ENCODE measurements at regions of chr2 and their contacts with region 1.

Region 1: DNA sequence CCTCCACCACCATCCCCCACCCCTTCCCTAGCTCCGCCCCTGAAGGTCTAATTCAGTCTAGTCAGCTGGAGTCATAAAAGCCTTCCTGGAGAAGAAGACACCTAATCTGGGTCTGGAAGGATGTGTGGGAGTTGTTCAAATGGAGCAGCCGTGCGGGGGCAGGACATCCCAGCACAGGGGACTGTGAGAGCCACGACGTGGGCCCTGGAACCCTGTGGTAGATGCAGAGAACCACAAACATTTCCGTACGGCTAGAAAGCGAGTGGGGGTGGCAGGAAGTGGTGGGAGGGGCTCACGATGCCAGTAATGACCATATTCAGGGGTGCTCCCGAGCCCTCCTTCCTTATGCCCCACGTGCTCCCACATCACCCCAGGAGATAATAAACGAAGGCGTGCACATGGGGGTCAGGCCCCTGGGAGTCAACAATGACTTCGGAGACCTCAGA is 20.9 kb upstream of the COL6A3 start:
- DNase-seq: peak; percentile 90
- H3K4me3 Mint-ChIP-seq: peak overlapping the region; percentile 7
- H3K27ac Mint-ChIP-seq: peak overlapping the region; percentile 61
- H3K4me1 Mint-ChIP-seq: peaks cover 85% of the 10 kb centered on the region
- H3K27me3 Mint-ChIP-seq: no peaks in the 10 kb centered on the region

Region 2: DNA sequence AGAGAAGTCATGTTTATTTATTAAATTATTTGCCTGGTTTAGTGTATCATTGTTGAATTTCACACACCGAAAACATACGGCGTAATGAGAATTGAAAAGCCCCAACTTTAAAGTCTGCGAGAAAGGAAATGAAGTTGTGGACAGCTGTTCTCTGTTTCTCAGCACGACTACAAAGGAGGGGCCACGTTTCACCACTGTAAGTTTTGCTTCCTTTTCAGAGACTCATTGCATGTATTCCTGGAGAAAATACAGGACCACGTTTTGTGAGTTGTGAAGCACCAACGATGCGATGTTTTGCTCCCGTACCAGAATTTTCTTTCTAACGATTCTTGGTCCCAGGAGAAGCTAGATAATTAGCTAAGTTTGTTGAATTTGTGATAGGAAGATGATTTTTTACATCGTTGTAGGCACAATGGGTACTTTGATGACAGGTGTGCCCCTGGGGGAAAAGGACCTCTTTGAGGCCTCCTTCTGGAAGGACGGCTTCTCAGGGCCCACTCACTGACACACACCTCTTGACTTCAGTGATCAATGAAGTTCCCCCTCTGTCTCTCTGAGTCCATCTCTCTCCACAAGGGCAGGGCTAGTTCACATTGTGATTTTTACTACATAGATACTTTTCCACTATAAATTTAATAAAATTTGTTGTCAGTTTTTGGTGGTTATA is 888.9 kb before region 1 on chr2:
- CTCF ChIA-PET with region 1: no interaction called
- intact Hi-C with region 1: loop called (anchors 5 kb)
- DNase-seq: peak; percentile 70
- H3K4me3 Mint-ChIP-seq: peak overlapping the region; percentile 64
- H3K27ac Mint-ChIP-seq: peak overlapping the region; percentile 89
- H3K4me1 Mint-ChIP-seq: peaks cover 82% of the 10 kb centered on the region
- H3K27me3 Mint-ChIP-seq: no peaks in the 10 kb centered on the region

Region 3: GRCh38 chr2:236562434-236562833 is 872.5 kb before region 1 on chr2:
- CTCF ChIA-PET with region 1: no interaction called
- intact Hi-C with region 1: no loop called
- DNase-seq: no peak
- H3K4me3 Mint-ChIP-seq: no peak overlapping the region
- H3K27ac Mint-ChIP-seq: no peak overlapping the region
- H3K4me1 Mint-ChIP-seq: peaks cover 28% of the 10 kb centered on the region
- H3K27me3 Mint-ChIP-seq: no peaks in the 10 kb centered on the region

Region 4: GRCh38 chr2:237085248-237086221 is 349.4 kb before region 1 on chr2 and contains the start of gene COPS8:
- CTCF ChIA-PET with region 1: no interaction called
- intact Hi-C with region 1: loop called (anchors 5 kb)
- DNase-seq: peak; percentile 93
- H3K4me3 Mint-ChIP-seq: peak within 1 kb of the TSS; percentile 97
- H3K27ac Mint-ChIP-seq: peak within 1 kb of the TSS; percentile 89
- H3K4me1 Mint-ChIP-seq: peaks cover 24% of the 10 kb centered on the region
- H3K27me3 Mint-ChIP-seq: no peaks in the 10 kb centered on the region
- total RNA-seq, gene COPS8: 67.8 to 69.2 TPM

Region 5: GRCh38 chr2:237154082-237154638 is 280.7 kb before region 1 on chr2:
- CTCF ChIA-PET with region 1: interaction called, 3 read pairs
- intact Hi-C with region 1: loop called (anchors 5 kb)
- DNase-seq: peak; percentile 72
- H3K4me3 Mint-ChIP-seq: no peak overlapping the region
- H3K27ac Mint-ChIP-seq: no peak overlapping the region
- H3K4me1 Mint-ChIP-seq: peaks cover 29% of the 10 kb centered on the region
- H3K27me3 Mint-ChIP-seq: no peaks in the 10 kb centered on the region

Region 6: DNA sequence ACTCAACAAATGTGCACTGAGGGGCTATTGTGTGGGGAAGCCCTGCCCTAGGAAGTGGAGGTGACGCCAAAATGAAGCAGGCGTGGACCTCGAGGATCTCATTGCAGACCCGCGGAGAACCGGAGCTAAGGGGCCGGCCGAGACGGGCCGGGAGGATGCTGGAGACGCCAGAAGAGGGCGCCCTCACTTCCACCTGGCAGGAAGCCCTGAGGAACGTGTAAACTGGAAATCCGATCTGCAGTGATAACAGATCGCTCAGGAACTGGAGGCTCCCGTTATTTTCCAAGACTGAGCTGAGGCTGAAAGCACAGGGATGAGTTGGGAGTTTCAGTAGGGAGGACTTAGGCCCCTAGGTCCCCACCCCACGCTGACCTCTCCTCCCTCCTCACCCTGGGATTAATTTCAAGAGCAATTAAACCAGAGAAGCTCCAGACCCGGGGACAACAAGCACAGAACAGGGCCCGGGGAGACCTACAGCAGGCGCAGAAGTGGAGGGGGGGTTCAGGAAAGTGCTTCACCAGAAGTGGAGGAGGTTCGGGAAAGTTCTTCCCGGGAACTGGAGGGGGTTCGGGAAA is 13.3 kb before region 1 on chr2:
- CTCF ChIA-PET with region 1: interaction called, 16 read pairs
- intact Hi-C with region 1: no loop called
- DNase-seq: peak; percentile 88
- H3K4me3 Mint-ChIP-seq: peak overlapping the region; percentile 25
- H3K27ac Mint-ChIP-seq: no peak overlapping the region
- H3K4me1 Mint-ChIP-seq: peaks cover 29% of the 10 kb centered on the region
- H3K27me3 Mint-ChIP-seq: peaks cover 11% of the 10 kb centered on the region

Region 7: DNA sequence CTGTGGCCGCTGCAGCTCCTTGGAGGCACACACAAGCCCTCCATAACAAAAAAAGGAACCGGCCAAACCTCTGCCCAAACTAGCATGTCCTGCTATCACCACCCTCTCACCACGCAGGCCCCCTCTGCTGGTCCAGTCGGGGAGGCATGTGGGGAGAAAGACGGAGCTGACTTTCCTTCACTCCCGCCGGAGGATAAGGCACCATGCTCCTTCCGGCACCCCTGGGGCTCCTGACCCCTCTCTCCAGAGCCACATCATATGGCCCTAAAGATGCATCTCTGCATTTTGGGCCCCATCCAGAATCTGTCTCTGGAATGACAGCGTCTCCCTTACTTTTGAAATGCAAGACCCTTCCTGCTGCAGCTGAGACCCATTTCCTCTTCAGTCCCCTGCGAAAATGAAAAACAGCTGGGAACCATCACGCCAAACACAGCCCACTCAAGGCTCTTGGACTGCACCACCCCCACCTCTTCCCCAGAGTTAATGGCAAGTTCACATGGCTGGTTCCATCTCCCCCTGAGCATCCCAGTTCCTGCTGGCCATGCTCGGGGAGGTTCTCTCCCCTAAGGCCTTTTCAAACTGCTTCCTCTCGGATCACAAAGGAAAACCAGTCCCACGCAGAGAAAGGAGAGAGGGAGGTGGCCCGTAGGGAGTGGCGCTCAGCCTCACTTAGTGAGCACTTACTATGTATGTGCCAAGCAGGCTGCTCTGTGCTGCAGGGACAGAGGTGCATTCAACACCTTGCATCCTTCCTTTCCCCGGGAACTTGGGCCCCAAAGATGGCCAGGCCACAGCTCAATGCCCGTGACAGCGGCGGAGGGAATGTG is 17.0 kb after region 1 on chr2:
- CTCF ChIA-PET with region 1: no interaction called
- intact Hi-C with region 1: no loop called
- DNase-seq: no peak
- H3K4me3 Mint-ChIP-seq: no peak overlapping the region
- H3K27ac Mint-ChIP-seq: no peak overlapping the region
- H3K4me1 Mint-ChIP-seq: peaks cover 9% of the 10 kb centered on the region
- H3K27me3 Mint-ChIP-seq: no peaks in the 10 kb centered on the region

Region 8: GRCh38 chr2:237474931-237475703 is 40.2 kb after region 1 on chr2:
- CTCF ChIA-PET with region 1: interaction called, 18 read pairs
- intact Hi-C with region 1: no loop called
- DNase-seq: peak; percentile 72
- H3K4me3 Mint-ChIP-seq: peak overlapping the region; percentile 65
- H3K27ac Mint-ChIP-seq: peak overlapping the region; percentile 70
- H3K4me1 Mint-ChIP-seq: peaks cover 11% of the 10 kb centered on the region
- H3K27me3 Mint-ChIP-seq: peaks cover 10% of the 10 kb centered on the region

Region 9: DNA sequence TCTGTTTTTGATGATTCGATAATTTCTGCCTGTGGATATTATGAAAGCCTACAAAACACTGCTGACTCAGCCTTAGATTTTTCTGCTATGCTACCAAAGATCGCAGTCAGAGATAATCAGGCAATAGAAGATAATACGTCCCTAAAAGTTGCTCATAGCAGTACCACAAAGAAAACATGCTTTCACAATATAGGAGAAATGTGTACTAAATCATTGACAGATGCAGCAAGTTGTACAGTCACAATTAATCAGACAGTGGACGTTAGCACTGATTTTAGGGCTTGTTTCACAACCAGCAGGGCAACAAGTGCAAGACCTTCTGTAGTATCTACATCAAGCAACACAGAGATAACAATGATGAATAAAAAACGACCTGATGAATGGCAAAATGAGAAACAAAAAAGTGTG is 383.2 kb after region 1 on chr2:
- CTCF ChIA-PET with region 1: no interaction called
- intact Hi-C with region 1: loop called (anchors 5 kb)
- DNase-seq: no peak
- H3K4me3 Mint-ChIP-seq: no peak overlapping the region
- H3K27ac Mint-ChIP-seq: no peak overlapping the region
- H3K4me1 Mint-ChIP-seq: peaks cover 26% of the 10 kb centered on the region
- H3K27me3 Mint-ChIP-seq: no peaks in the 10 kb centered on the region